Activated CD8-positive, alpha-beta T cell treated with anti-CD3 and anti-CD28 coated beads, Interleukin-2, amount 10 ng/mL, durations not matched to agents 7 days and 5 days (primary cell): ENCODE measurements at regions of chr5 and their contacts with region 1.

Region 1: DNA sequence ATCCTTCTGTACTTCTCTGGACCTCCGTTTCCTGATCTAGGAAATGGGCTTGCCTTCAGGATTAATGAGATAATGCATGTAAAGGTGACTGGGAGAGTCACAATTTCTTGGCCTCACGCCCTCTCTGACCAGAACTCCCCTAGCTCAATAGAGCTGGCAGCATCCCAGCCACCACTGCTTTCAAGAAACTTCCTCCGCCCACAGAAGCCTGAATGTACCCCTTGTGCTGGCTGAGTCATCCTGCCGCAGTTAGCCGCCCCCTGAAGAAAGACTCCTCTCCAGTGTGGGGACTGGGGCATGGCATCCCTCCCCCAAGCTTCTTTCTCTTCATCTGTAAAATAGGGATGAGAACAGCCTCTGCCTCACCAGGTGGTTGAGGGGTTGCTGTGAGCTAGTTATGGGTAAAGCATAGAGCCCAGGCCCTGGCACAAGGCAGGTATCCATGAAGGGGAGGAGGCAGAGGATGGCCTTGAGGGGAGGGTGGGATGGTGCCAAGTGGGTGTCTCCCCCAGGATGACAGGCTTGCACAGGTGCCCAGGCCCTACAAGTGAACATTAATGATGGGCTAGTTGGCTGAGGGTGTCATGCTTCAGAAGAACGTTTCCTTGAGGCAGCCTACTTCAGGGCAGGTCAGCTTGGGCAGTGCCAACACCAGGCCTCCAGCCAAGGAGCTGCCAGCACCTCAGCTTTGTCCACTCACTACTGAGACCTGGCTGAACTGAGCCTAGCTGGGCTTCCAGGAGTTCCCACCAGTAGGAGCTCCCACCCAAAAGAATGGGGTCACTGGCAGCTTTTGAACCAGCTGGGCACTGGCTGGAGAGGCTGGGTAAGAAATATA is 3.4 kb downstream of the PDLIM4 start:
- DNase-seq: no peak
- ATAC-seq: no peak
- H3K4me3 Mint-ChIP-seq: no peak overlapping the region
- H3K27ac Mint-ChIP-seq: no peak overlapping the region
- H3K4me1 Mint-ChIP-seq: peaks cover 9% of the 10 kb centered on the region
- H3K27me3 Mint-ChIP-seq: peaks cover 14% of the 10 kb centered on the region

Region 2: GRCh38 chr5:132272311-132273210 is 11.6 kb after region 1 on chr5:
- CTCF ChIA-PET with region 1: interaction called, 14 read pairs
- POLR2A ChIA-PET with region 1: no interaction called
- DNase-seq: peak; percentile 73
- ATAC-seq: peak; percentile 40
- H3K4me3 Mint-ChIP-seq: no peak overlapping the region
- H3K27ac Mint-ChIP-seq: no peak overlapping the region
- H3K4me1 Mint-ChIP-seq: peaks cover 11% of the 10 kb centered on the region
- H3K27me3 Mint-ChIP-seq: peaks cover 10% of the 10 kb centered on the region